OCI-LY7 (cell line): ENCODE measurements at regions of chr13 and their contacts with region 1.

Region 1: GRCh38 chr13:49540552-49540951 is 44.8 kb downstream of the PHF11 start:
- DNase-seq: peak; percentile 69
- H3K4me3 ChIP-seq: peak overlapping the region; percentile 61
- H3K27ac ChIP-seq: peak overlapping the region; percentile 81
- H3K4me1 ChIP-seq: peaks cover 42% of the 10 kb centered on the region
- CTCF ChIP-seq: no peak

Region 2: DNA sequence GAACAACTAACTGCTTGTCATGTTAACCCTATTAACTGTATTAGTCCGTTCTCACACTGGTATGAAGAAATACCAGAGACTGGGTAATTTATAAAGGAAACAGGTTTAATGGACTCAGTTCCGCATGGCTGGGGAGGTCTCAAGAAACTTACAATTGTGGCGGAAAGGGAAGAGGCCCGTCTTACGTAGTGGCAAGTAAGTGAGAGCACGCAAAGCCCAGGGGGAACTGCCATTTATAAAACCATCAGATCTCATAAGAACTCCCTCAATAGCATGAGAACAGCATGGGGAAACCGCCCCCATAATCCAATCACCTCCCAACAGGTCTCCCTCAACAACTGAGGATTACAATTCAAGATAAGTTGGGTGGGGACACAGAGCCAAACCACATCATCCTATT is 10.1 kb before region 1 on chr13:
- CTCF ChIA-PET with region 1: no interaction called
- POLR2A ChIA-PET with region 1: interaction called, 16 read pairs
- intact Hi-C with region 1: no loop called
- DNase-seq: peak; percentile 76
- H3K4me3 ChIP-seq: no peak overlapping the region
- H3K27ac ChIP-seq: peak overlapping the region; percentile 61
- H3K4me1 ChIP-seq: peaks cover 57% of the 10 kb centered on the region
- CTCF ChIP-seq: no peak

Region 3: GRCh38 chr13:49620170-49620621 is 79.6 kb after region 1 on chr13:
- CTCF ChIA-PET with region 1: no interaction called
- POLR2A ChIA-PET with region 1: interaction called, 13 read pairs
- intact Hi-C with region 1: no loop called
- DNase-seq: peak; percentile 74
- H3K4me3 ChIP-seq: peak overlapping the region; percentile 54
- H3K27ac ChIP-seq: peak overlapping the region; percentile 58
- H3K4me1 ChIP-seq: peaks cover 27% of the 10 kb centered on the region
- CTCF ChIP-seq: no peak

Region 4: DNA sequence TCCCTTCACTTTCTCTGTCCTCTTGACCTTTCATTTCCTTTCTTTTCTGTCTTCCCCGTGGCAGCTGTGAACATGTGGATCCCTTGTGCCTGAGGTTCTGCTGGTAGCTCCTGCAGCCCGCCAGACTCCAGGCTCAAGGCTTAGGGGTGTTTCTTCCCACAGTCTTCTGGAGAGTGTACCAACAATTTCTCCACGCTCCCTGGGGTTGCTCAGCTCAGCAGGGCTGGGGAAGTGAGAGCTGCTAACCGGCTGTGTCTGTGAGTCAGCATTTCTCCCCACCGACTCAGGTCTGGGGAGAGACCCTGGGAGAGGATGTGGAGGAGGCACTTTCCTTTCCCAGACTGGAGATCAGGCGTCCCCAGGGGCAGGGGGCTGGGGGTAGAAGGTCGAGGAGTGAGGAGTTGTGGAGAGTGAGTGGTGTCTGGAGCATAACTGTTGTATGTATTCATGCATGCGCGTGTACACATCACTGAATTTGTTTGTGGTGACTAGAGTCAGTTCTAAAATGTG is 668.3 kb after region 1 on chr13:
- CTCF ChIA-PET with region 1: no interaction called
- POLR2A ChIA-PET with region 1: no interaction called
- intact Hi-C with region 1: no loop called
- DNase-seq: peak; percentile 45
- H3K4me3 ChIP-seq: peak overlapping the region; percentile 41
- H3K27ac ChIP-seq: no peak overlapping the region
- H3K4me1 ChIP-seq: peaks cover 14% of the 10 kb centered on the region
- CTCF ChIP-seq: no peak